Activated T-helper 1 cell treated with anti-CD3 and anti-CD28 coated beads, Interleukin-12 subunit alpha, Interleukin-12 subunit beta, Interleukin-2, Interleukin-4 antibody, amounts not matched to agents 30 ng/mL and 10 ng/mL and 1 ng/mL, durations not matched to agents 14 hours and 24 hours and 36 hours (primary cell): ENCODE measurements at regions of chr3 and their contacts with region 1.

Region 1: DNA sequence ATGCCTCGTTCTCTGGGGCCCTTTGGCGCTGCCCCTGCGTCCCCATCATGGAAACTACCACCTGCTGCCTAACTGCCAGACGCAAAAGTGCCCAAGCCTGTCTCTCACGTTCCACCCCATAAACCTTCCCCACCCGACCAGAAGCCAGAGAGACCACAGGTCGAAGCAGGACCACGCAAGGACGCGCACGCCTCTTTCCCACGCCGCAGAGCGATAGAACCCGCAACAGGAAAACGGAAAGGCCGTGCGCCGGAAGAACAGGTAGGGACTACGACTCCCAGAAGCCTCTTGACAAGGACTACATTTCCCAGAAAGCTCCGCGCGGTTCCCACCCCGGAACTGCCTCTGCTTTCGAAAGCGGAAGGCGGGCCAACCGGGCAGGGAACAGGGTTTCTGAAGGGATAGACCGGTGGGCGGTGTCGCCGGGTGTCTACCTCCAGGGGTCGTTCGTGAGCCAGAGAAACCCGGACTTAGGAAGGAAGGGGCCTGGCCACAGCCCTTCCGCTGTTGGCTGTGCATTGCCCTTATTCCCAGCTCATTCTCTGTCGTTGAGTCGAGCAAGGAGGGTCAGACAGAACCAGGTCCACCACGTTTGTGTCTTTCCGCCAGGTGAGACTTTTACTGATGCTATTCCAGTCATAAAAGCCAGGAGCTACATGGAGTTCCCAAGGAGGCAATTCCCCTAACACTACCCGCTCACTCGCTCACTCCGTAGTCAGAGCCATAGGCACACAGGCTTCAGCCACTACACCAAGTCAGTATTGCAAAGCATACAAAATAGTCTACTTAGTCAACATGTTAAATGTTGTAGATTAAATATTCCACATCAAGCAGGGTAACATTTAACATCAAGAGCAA is 56.6 kb upstream of the ZBTB38 start:
- DNase-seq: peak; percentile 97
- H3K4me3 Mint-ChIP-seq: peak overlapping the region; percentile 95
- H3K27ac Mint-ChIP-seq: peak overlapping the region; percentile 98
- H3K4me1 Mint-ChIP-seq: peaks cover 51% of the 10 kb centered on the region
- H3K27me3 Mint-ChIP-seq: no peaks in the 10 kb centered on the region

Region 2: DNA sequence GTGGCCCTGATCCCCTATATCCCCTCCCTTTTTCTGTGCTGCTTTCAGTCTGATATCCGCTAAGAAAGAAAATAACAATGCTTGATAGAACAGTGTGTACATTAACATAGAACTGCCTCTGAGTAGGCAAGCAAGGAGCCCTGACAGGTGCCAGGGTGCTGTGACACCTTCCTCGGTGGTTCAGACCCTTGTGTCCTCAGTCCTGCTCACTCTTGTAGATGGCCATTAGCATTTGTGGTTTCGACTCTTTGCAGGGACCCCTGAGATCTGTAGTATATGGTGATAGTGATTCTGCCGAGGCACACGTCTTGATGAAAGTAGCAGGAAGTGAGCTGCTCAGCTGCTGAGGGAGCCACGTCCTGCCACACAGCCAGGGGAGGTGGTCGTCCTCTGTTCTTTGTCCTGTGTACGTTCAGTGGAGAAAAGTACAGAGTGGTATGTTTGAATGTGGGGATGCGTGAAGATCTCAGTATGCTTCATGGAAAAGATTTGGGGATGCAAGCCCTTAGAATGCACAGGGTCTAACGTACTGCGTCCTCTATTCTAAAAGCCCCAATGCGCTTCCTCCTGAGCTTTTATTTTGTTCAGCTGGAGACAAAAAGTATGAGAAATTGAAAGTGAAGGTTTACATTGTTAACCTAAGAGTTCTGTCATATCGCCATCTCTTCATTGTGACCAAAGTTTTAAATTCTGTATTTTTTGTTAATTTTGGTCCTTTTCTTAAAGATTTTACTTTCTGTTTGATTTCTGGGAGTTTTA is 44.7 kb before region 1 on chr3:
- intact Hi-C with region 1: no loop called
- DNase-seq: peak; percentile 30
- H3K4me3 Mint-ChIP-seq: peak overlapping the region; percentile 81
- H3K27ac Mint-ChIP-seq: peak overlapping the region; percentile 93
- H3K4me1 Mint-ChIP-seq: peaks cover 49% of the 10 kb centered on the region
- H3K27me3 Mint-ChIP-seq: no peaks in the 10 kb centered on the region

Region 3: DNA sequence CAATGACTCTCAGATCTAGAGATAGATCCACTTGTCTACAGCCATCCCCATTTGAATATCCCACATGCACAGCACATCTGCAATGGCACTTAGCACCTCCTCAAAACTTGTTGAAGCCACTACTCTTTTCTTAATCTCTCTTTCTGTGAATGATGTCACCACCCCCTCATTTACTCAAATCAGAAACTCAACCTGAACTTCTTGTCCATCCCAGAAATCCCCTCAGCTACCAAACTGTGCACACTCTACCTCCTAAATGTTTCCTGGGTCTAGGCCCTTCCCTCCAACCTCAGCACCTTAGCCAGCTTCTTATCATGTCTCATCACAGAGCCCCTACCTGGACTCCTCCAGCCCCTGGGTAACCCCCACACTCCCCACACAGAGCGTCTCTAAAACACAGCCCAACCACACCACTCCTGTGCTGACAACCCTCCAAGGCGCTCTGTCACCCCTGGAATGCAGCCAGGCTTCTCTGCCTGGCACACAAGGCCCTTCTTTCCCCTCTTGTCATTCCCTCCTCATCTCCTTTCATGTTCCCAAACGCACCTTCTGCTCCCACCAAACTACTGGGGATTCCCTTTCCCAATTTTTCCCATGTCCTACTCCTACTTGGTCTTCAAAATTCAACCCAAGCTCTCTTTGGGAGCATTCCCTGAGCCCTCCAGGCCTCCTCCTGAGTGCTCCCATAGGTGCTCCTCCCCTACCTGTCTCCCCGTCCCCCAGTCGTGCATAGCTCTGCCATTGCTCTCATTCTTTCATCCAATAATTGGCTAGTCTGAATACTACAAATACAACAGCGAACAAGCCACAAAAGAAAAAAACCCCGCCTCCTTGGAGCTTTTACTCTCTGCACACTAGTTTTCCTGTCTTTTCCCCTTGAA is 16.8 kb after region 1 on chr3:
- intact Hi-C with region 1: loop called (anchors 1 kb)
- DNase-seq: no peak
- H3K4me3 Mint-ChIP-seq: no peak overlapping the region
- H3K27ac Mint-ChIP-seq: peak overlapping the region; percentile 10
- H3K4me1 Mint-ChIP-seq: peaks cover 12% of the 10 kb centered on the region
- H3K27me3 Mint-ChIP-seq: no peaks in the 10 kb centered on the region

Region 4: DNA sequence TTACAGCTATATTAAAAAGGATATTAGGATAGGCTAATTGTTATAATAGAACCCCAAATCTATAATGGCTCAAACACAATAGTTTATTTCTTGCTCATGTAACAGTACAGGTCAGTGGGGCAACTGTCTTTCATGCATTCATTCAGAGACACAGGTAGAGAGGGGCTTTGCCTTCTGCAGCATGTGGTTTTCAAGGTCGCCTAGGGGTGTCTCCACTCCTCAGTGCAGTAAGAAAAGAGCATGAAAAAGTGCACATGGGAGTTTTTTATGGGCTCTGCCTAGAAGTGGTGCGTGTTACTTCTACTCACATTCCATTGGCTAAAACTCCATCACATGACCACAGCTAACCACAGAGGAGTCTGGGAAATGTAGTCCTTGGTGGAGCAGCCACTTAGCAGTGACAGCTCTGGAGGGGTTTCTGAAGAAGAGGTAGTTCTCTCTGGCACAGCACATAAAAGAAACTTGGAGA is 58.4 kb after region 1 on chr3:
- intact Hi-C with region 1: loop called (anchors 1 kb)
- DNase-seq: peak; percentile 50
- H3K4me3 Mint-ChIP-seq: no peak overlapping the region
- H3K27ac Mint-ChIP-seq: no peak overlapping the region
- H3K4me1 Mint-ChIP-seq: peaks cover 27% of the 10 kb centered on the region
- H3K27me3 Mint-ChIP-seq: no peaks in the 10 kb centered on the region

Region 5: DNA sequence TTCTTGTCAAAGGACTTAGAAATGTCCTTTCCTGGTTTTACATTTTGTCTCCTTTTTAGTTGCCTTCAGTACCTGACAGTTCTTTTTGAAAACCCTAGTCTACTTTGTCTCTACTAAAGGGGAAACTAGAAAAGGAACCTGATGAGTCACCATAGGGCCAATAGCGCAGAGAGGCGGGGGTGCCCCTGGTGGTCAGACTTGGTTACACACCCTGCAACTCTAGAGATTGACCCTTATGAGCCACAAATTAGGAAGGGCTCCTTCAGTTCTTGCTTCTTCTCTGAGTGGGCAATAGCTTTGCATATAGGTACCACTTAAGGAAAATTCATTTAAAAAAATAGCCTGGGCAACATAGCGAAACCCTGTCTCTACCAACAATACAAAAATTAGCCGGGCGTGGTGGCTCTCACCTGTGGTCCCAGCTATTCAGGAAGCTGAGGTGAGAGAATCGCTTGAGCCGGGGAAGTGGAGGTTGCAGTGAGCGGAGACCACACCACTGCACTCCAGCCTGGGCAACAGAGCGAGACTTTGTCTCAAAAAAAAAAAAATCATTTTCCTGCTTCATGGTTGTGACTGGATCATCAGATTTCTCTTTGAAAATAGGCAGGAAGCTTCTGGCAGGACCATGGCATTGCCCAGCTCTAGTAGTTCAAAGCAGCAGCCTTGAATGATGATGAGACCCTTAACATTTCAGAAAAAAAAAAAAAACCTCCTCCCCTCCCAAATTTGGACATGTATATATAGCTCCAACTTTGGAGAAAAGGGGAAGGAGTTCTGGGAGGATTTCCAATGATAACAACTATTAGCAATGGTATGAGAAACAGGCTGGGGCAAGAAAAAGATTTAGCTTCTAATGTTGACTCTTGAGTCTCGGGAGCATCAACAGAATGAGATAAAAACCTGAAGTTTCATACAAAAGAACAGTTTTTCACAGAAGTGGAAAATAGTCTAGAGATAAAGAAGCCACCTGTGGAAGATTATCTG is 129.9 kb after region 1 on chr3:
- intact Hi-C with region 1: loop called (anchors 1 kb)
- DNase-seq: peak; percentile 59
- H3K4me3 Mint-ChIP-seq: no peak overlapping the region
- H3K27ac Mint-ChIP-seq: peak overlapping the region; percentile 3
- H3K4me1 Mint-ChIP-seq: peaks cover 17% of the 10 kb centered on the region
- H3K27me3 Mint-ChIP-seq: no peaks in the 10 kb centered on the region

Region 6: DNA sequence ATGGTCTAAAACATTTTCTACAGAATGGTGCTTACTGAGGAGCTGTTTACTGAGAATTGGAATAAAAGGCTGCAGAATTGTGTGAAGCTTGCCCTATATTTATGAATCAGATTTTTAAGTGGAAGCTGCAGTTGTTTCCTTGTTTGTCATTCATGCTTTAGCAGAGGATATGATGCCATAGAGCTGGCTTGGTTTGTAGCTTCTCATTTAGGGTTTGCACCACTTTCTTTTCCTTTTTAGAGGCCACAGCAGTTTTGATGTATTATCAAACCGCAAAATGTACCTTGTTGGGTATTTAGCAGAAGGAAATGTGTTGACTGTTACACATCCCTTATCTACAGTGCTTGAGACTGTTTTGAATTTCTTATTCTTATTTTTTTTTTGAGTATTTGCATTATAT is 241.3 kb after region 1 on chr3:
- intact Hi-C with region 1: loop called (anchors 1 kb)
- DNase-seq: peak; percentile 35
- H3K4me3 Mint-ChIP-seq: peak overlapping the region; percentile 38
- H3K27ac Mint-ChIP-seq: peak overlapping the region; percentile 93
- H3K4me1 Mint-ChIP-seq: peaks cover 52% of the 10 kb centered on the region
- H3K27me3 Mint-ChIP-seq: no peaks in the 10 kb centered on the region

Region 7: GRCh38 chr3:142578327-142579223 is 1266.8 kb after region 1 on chr3 and contains the start of gene ATR:
- intact Hi-C with region 1: loop called (anchors 5 kb)
- DNase-seq: peak; percentile 96
- H3K4me3 Mint-ChIP-seq: peak within 1 kb of the TSS; percentile 100
- H3K27ac Mint-ChIP-seq: peak within 1 kb of the TSS; percentile 100
- H3K4me1 Mint-ChIP-seq: peaks cover 46% of the 10 kb centered on the region
- H3K27me3 Mint-ChIP-seq: peaks cover 10% of the 10 kb centered on the region
- total RNA-seq, gene ATR: 27.0 and 35.5 TPM in 2 replicates